ENCODE measurements at regions of chr2 and their contacts with region 1.

Region 1: DNA sequence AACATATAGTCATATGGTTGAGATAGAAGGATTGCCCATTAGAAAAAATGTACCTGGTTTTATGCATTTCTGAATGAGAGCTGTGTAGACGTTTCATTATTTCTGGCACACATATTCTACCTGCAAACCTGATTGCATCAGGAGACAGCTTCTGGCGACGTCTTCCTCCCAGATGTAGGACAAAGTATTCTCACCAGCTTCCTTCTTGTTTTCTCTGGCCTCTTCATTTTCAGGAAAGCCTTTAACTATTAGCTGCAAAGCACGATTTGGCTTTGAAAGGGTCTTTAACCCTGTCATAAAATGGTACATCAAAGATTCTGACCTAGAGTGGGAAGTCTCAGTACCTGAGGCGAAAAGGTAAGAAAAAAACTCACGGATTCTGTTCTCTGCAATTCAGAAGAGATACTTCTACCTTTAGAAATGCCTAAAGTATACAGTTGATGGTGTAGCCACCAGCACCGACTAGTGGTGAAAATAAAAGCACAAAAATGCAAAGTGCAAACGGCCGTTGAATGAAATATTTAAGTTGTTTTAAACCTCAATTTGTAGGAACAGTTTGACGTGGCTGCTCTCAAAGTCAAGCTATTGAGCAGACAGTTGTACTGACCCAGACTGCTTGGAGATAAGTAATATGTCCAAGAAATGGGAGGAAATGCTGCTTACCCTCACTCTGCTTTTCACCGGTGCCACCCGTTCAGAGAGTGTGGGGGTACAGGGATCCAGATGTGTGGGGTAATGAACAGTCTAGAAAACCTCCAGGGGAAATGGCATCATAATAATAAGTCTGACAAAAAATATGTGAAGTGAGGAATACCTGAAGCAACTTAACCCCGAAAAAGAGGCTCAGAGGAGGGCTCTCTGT is 20.2 kb downstream of the IL18RAP start:
- DNase-seq: peak; percentile 43 to 59 (median 56)
- H3K4me3 ChIP-seq: no peak overlapping the region
- H3K4me3 Mint-ChIP-seq: peak overlapping the region in 5 of 8 donors; percentile 19 to 75 (median 66)
- H3K27ac ChIP-seq: no peak overlapping the region
- H3K27ac Mint-ChIP-seq: peak overlapping the region in 5 of 7 donors; percentile 43 to 92 (median 53)
- H3K4me1 ChIP-seq: peaks cover 5% of the 10 kb centered on the region
- H3K4me1 Mint-ChIP-seq: peaks cover 8 to 11% (median 8%) of the 10 kb centered on the region in 4 donors
- H3K27me3 ChIP-seq: no peaks in the 10 kb centered on the region
- H3K27me3 Mint-ChIP-seq: no peaks in the 10 kb centered on the region

Region 2: DNA sequence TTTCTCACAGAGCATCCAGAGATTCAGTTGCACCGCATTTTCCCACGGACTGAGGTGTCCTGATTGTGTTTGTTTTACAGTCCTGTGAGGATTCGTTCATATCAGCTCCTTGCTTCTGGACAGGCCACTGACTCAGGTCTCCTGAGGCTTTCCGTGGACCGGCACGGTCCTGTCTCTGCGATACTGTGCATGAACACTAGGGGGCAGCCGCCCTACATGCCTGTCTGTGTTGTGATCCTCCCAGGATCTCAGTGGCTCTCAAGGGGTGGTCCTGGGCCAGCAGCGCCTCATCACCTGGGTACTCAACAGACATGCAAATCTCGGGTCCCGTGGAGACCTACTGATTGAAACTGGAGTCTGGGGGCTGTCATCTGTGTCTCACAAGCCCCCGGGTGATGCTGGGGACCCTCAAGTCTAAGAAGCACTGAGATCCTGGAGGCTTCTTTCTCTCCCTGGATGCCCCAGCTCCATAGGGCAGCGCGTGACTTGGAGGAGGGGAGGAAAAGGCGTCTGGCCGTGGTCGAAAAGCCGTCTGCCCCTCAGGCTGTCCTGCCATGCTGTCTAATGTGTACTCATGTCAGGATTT is 422.5 kb before region 1 on chr2:
- CTCF ChIA-PET with region 1: interaction called, 21 read pairs
- POLR2A ChIA-PET with region 1: no interaction called
- intact Hi-C with region 1: loop called (anchors 1 kb)
- DNase-seq: peak; percentile 70 to 80 (median 72)
- H3K4me3 ChIP-seq: no peak overlapping the region
- H3K4me3 Mint-ChIP-seq: peak overlapping the region in 2 of 8 donors; percentile 24 to 31
- H3K27ac ChIP-seq: no peak overlapping the region
- H3K27ac Mint-ChIP-seq: no peak overlapping the region
- H3K4me1 ChIP-seq: no peaks in the 10 kb centered on the region
- H3K4me1 Mint-ChIP-seq: peaks cover 0 to 6% (median 3%) of the 10 kb centered on the region in 4 donors
- H3K27me3 ChIP-seq: no peaks in the 10 kb centered on the region
- H3K27me3 Mint-ChIP-seq: no peaks in the 10 kb centered on the region

Region 3: GRCh38 chr2:102251042-102251848 is 192.0 kb before region 1 on chr2:
- CTCF ChIA-PET with region 1: interaction called, 38 read pairs
- POLR2A ChIA-PET with region 1: interaction called, 3 read pairs
- intact Hi-C with region 1: loop called (anchors 1 kb)
- DNase-seq: peak; percentile 50 to 58 (median 54)
- H3K4me3 ChIP-seq: peak overlapping the region; percentile 80 to 86
- H3K4me3 Mint-ChIP-seq: peak overlapping the region; percentile 90 to 99 (median 95)
- H3K27ac ChIP-seq: no peak overlapping the region
- H3K27ac Mint-ChIP-seq: peak overlapping the region; percentile 18 to 94 (median 78)
- H3K4me1 ChIP-seq: peaks cover 12% of the 10 kb centered on the region
- H3K4me1 Mint-ChIP-seq: peaks cover 14 to 39% (median 23%) of the 10 kb centered on the region in 4 donors
- H3K27me3 ChIP-seq: no peaks in the 10 kb centered on the region
- H3K27me3 Mint-ChIP-seq: peaks cover 0 to 2% of the 10 kb centered on the region in 2 donors

Region 4: GRCh38 chr2:102301867-102302362 is 141.3 kb before region 1 on chr2:
- CTCF ChIA-PET with region 1: interaction called, 21 read pairs
- POLR2A ChIA-PET with region 1: interaction called, 3 read pairs
- intact Hi-C with region 1: loop called (anchors 1 kb)
- DNase-seq: peak; percentile 33 to 60 (median 40)
- H3K4me3 ChIP-seq: no peak overlapping the region
- H3K4me3 Mint-ChIP-seq: peak overlapping the region in 6 of 8 donors; percentile 11 to 77 (median 50)
- H3K27ac ChIP-seq: no peak overlapping the region
- H3K27ac Mint-ChIP-seq: peak overlapping the region in 2 of 7 donors; percentile 43 to 54
- H3K4me1 ChIP-seq: peaks cover 12% of the 10 kb centered on the region
- H3K4me1 Mint-ChIP-seq: peaks cover 13 to 18% (median 15%) of the 10 kb centered on the region in 4 donors
- H3K27me3 ChIP-seq: no peaks in the 10 kb centered on the region
- H3K27me3 Mint-ChIP-seq: peaks cover 3 to 5% of the 10 kb centered on the region in 2 donors

Region 5: DNA sequence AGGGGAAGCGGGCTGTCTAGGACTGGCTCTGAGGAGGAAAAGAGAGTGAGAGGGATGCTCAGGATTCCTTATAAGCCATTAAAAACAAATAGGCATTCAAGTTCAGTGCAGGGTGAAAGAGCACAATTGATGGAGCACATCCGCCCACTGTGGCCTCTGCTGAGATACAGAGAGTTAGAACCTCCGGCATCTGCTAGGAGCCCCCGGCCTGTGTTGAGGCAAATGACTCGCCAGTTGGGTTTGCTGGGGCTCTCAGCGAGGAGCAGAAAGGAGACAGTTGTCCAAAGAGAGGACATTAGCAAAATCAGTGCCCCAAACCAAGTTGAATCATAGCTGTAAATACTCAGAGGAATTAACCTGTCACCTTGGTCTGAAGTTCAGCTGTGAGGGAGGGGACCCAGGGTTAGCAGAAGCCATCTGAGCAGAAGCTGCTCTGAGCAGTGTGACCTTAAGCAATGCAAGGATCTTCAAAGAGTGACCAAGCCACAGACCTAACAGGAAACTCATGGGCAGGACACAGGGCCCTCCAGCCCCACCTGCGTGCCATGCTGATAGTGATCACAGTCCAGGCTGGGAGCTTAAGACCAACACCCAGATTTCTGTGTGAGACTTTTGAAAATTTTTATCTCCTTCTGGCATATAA is 43.6 kb before region 1 on chr2:
- CTCF ChIA-PET with region 1: interaction called, 10 read pairs
- POLR2A ChIA-PET with region 1: no interaction called
- intact Hi-C with region 1: no loop called
- DNase-seq: no peak
- H3K4me3 ChIP-seq: no peak overlapping the region
- H3K4me3 Mint-ChIP-seq: no peak overlapping the region
- H3K27ac ChIP-seq: no peak overlapping the region
- H3K27ac Mint-ChIP-seq: peak overlapping the region in 1 of 7 donors; percentile 30
- H3K4me1 ChIP-seq: no peaks in the 10 kb centered on the region
- H3K4me1 Mint-ChIP-seq: peaks cover 13 to 26% (median 19%) of the 10 kb centered on the region in 4 donors
- H3K27me3 ChIP-seq: no peaks in the 10 kb centered on the region
- H3K27me3 Mint-ChIP-seq: no peaks in the 10 kb centered on the region

Region 6: GRCh38 chr2:102424754-102425153 is 18.4 kb before region 1 on chr2:
- CTCF ChIA-PET with region 1: interaction called, 12 read pairs
- POLR2A ChIA-PET with region 1: interaction called, 4 read pairs
- intact Hi-C with region 1: no loop called
- DNase-seq: no peak
- H3K4me3 ChIP-seq: no peak overlapping the region
- H3K4me3 Mint-ChIP-seq: peak overlapping the region in 6 of 8 donors; percentile 15 to 56 (median 42)
- H3K27ac ChIP-seq: no peak overlapping the region
- H3K27ac Mint-ChIP-seq: peak overlapping the region in 5 of 7 donors; percentile 5 to 80 (median 43)
- H3K4me1 ChIP-seq: peaks cover 54% of the 10 kb centered on the region
- H3K4me1 Mint-ChIP-seq: peaks cover 41 to 84% (median 62%) of the 10 kb centered on the region in 4 donors
- H3K27me3 ChIP-seq: no peaks in the 10 kb centered on the region
- H3K27me3 Mint-ChIP-seq: no peaks in the 10 kb centered on the region

Region 7: DNA sequence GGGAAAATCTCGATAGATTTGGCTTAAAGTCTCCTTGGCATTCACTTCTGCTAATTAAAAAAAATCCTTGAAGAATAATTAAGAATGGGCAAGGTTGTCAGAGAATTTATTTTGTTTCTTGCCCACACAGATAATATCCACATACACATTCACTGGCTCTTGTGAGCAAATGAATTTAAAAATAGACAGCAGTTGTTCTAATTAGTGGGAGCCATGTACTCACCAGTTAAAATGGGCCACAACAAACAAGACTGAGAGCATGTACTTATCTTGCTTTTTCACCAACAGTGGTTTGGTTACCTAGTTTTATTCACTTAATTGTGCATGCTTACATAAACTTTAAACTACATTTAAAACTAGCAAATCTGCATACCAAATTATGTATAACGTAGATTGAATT is 372.1 kb after region 1 on chr2:
- CTCF ChIA-PET with region 1: no interaction called
- POLR2A ChIA-PET with region 1: no interaction called
- intact Hi-C with region 1: no loop called
- DNase-seq: no peak
- H3K4me3 ChIP-seq: no peak overlapping the region
- H3K4me3 Mint-ChIP-seq: no peak overlapping the region
- H3K27ac ChIP-seq: no peak overlapping the region
- H3K27ac Mint-ChIP-seq: no peak overlapping the region
- H3K4me1 ChIP-seq: no peaks in the 10 kb centered on the region
- H3K4me1 Mint-ChIP-seq: no peaks in the 10 kb centered on the region
- H3K27me3 ChIP-seq: no peaks in the 10 kb centered on the region
- H3K27me3 Mint-ChIP-seq: no peaks in the 10 kb centered on the region

Measured in CD4-positive, alpha-beta memory T cell (primary cell).